ENCODE measurements at regions of chr10 and their contacts with region 1.

Region 1: GRCh38 chr10:14397066-14397465 is 66.3 kb upstream of the FRMD4A start:
- DNase-seq: peak; percentile 100
- ATAC-seq: peak; percentile 92
- H3K4me3 ChIP-seq: no peak overlapping the region
- H3K27ac ChIP-seq: peak overlapping the region; percentile 47; the same call in 1 of the 2 replicates
- H3K4me1 ChIP-seq: peaks cover 20% of the 10 kb centered on the region
- H3K27me3 ChIP-seq: no peaks in the 10 kb centered on the region
- CTCF ChIP-seq: no peak
- POLR2A ChIP-seq: peak; percentile 47
- RAD21 ChIP-seq: peak; percentile 8; the same call in 1 of the 2 replicates

Region 2: GRCh38 chr10:14185316-14186045 is 211.6 kb before region 1 on chr10:
- CTCF ChIA-PET with region 1: no interaction called
- POLR2A ChIA-PET with region 1: interaction called, 28 read pairs
- dilution Hi-C with region 1: no loop called
- in situ Hi-C with region 1: no loop called
- intact Hi-C with region 1: no loop called
- DNase-seq: peak; percentile 90
- ATAC-seq: peak; percentile 92
- H3K4me3 ChIP-seq: no peak overlapping the region
- H3K27ac ChIP-seq: no peak overlapping the region
- H3K4me1 ChIP-seq: peaks cover 2% of the 10 kb centered on the region; the same call in 1 of the 2 replicates
- H3K27me3 ChIP-seq: peaks cover 32% of the 10 kb centered on the region
- CTCF ChIP-seq: no peak
- POLR2A ChIP-seq: peak; percentile 99
- RAD21 ChIP-seq: no peak

Region 3: DNA sequence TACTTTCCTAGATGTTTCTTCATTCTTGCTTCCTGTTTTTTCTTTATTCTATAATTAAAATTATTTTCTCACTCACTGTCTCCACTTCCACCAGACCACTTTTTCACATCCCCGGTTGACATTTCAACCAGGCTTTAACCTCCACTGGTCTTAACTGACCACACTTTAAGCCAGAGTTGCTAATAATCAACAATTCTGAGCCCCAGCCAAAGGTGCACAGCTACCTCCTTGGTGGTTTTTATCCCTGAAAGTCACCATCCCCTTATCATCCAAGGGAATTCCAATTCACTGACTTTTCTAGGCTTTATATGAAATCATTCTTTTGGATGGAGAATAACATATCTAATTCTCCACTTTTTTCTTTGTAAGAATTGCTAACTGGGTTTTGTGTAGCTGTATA is 205.2 kb before region 1 on chr10:
- CTCF ChIA-PET with region 1: no interaction called
- POLR2A ChIA-PET with region 1: no interaction called
- dilution Hi-C with region 1: no loop called
- in situ Hi-C with region 1: no loop called
- intact Hi-C with region 1: loop called (anchors 5 kb)
- DNase-seq: no peak
- ATAC-seq: no peak
- H3K4me3 ChIP-seq: no peak overlapping the region
- H3K27ac ChIP-seq: no peak overlapping the region
- H3K4me1 ChIP-seq: no peaks in the 10 kb centered on the region
- H3K27me3 ChIP-seq: peaks cover 28% of the 10 kb centered on the region
- CTCF ChIP-seq: no peak
- POLR2A ChIP-seq: no peak
- RAD21 ChIP-seq: no peak

Region 4: DNA sequence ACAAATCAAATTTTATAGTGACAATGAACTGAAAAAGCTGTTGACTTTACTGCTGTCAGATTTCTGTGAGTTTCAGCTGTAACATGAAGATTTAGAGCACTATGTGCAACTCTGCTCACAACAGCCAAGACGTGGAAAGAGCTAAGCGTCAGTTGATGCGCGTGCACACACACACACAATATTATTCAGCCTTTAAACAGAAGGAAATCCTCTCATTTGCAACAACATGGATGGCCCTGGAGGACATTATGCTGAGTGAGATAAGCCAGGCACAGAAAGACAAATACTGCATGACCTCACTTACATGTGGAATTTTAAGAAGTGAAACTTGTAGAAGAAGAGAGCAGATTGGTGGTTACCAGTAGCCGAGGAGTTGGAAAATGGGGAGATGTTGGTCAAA is 16.5 kb after region 1 on chr10:
- CTCF ChIA-PET with region 1: interaction called, 5 read pairs
- POLR2A ChIA-PET with region 1: interaction called, 13 read pairs
- dilution Hi-C with region 1: no loop called
- in situ Hi-C with region 1: no loop called
- intact Hi-C with region 1: no loop called
- DNase-seq: peak; percentile 12
- ATAC-seq: no peak; the same call in 1 of the 2 replicates
- H3K4me3 ChIP-seq: no peak overlapping the region
- H3K27ac ChIP-seq: 0 out of 2 replicates have a peak overlapping the region, but pooled peaks have one; percentile 33
- H3K4me1 ChIP-seq: peaks cover 11% of the 10 kb centered on the region
- H3K27me3 ChIP-seq: no peaks in the 10 kb centered on the region
- CTCF ChIP-seq: no peak
- POLR2A ChIP-seq: no peak
- RAD21 ChIP-seq: no peak

Region 5: GRCh38 chr10:14571866-14572507 is 174.9 kb after region 1 on chr10:
- CTCF ChIA-PET with region 1: no interaction called
- POLR2A ChIA-PET with region 1: no interaction called
- dilution Hi-C with region 1: no loop called
- in situ Hi-C with region 1: no loop called
- intact Hi-C with region 1: no loop called
- DNase-seq: peak; percentile 59
- ATAC-seq: peak; percentile 42; the same call in 1 of the 2 replicates
- H3K4me3 ChIP-seq: no peak overlapping the region
- H3K27ac ChIP-seq: peak overlapping the region; percentile 28; the same call in 1 of the 2 replicates
- H3K4me1 ChIP-seq: peaks cover 19% of the 10 kb centered on the region
- H3K27me3 ChIP-seq: no peaks in the 10 kb centered on the region
- CTCF ChIP-seq: no peak
- POLR2A ChIP-seq: no peak
- RAD21 ChIP-seq: no peak

Region 6: GRCh38 chr10:14891151-14891550 is 494.1 kb after region 1 on chr10:
- CTCF ChIA-PET with region 1: no interaction called
- POLR2A ChIA-PET with region 1: no interaction called
- dilution Hi-C with region 1: no loop called
- in situ Hi-C with region 1: no loop called
- intact Hi-C with region 1: no loop called
- DNase-seq: no peak
- ATAC-seq: no peak
- H3K4me3 ChIP-seq: no peak overlapping the region
- H3K27ac ChIP-seq: no peak overlapping the region
- H3K4me1 ChIP-seq: no peaks in the 10 kb centered on the region
- H3K27me3 ChIP-seq: no peaks in the 10 kb centered on the region
- CTCF ChIP-seq: no peak
- POLR2A ChIP-seq: no peak
- RAD21 ChIP-seq: no peak

Region 7: DNA sequence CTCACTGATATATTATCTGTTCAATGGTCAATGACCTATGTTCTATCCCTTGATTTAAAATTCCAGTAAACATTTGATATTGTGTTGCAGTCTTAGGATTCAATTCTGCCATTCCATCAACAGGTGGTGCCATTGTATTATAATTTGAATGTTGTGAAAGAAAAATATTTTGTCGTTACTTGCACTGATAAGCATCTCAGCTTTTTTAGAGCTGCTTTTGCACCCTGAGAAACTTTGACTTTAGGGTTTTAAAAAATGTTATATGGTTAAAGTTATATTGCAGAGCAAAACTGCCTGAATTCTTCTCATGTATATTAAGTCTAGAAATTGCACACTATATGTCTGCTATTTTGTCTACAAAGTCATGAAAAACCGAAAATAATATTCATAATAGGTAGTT is 1482.0 kb after region 1 on chr10:
- CTCF ChIA-PET with region 1: no interaction called
- POLR2A ChIA-PET with region 1: no interaction called
- dilution Hi-C with region 1: no loop called
- in situ Hi-C with region 1: no loop called
- intact Hi-C with region 1: no loop called
- DNase-seq: peak; percentile 40
- ATAC-seq: no peak; the same call in 1 of the 2 replicates
- H3K4me3 ChIP-seq: no peak overlapping the region
- H3K27ac ChIP-seq: no peak overlapping the region
- H3K4me1 ChIP-seq: no peaks in the 10 kb centered on the region
- H3K27me3 ChIP-seq: peaks cover 6% of the 10 kb centered on the region
- CTCF ChIP-seq: peak; percentile 66
- POLR2A ChIP-seq: no peak
- RAD21 ChIP-seq: peak; percentile 62

Measured in IMR-90 (cell line).